ENCODE measurements at regions of chr2 and their contacts with region 1.

Region 1: DNA sequence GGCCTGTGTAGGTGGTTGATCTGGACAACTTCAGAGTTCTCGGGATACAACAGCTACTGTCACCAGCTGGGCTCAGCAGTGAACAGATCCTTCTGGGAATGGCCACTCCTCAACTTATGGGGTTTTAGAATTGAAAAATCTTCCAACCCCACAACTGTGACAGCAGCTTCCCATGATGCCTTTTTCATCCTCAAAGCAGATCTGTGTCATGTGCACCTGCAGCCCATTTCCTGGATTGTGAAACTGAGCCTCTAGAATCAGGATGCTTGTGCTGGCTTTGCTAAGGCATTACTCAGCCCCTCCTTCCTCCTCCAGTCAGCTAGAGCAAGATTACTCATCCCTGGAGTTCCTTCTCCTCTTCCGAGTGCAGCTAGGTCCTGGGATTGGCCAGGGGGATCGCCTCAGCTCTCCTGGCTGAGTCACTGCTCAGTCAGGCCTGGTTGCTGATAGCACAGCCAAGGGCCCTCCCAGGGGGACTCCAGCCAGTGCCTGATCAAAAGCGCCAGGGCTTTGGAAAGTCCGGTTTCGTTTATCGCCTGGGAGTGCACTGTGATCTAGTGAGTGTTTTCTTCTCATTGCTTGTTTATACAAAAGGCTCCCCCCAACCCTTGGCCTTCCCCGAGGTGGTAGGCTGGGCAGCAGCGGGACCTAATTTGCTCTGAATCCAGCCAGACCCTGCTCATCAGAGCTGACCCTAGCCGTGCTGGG is 2.4 kb upstream of the LPIN1 start:
- DNase-seq: peak; percentile 43 to 91 (median 62)
- ATAC-seq: peak; percentile 30
- H3K4me3 ChIP-seq: peak overlapping the region; percentile 34
- H3K4me3 Mint-ChIP-seq: peak overlapping the region; percentile 78
- H3K27ac ChIP-seq: peak overlapping the region in 1 of 2 donors; percentile 61
- H3K27ac Mint-ChIP-seq: peak overlapping the region; percentile 76
- H3K4me1 ChIP-seq: peaks cover 52% of the 10 kb centered on the region
- H3K4me1 Mint-ChIP-seq: peaks cover 54% of the 10 kb centered on the region
- H3K27me3 ChIP-seq: no peaks in the 10 kb centered on the region
- H3K27me3 Mint-ChIP-seq: no peaks in the 10 kb centered on the region
- CTCF ChIP-seq: no peak

Region 2: DNA sequence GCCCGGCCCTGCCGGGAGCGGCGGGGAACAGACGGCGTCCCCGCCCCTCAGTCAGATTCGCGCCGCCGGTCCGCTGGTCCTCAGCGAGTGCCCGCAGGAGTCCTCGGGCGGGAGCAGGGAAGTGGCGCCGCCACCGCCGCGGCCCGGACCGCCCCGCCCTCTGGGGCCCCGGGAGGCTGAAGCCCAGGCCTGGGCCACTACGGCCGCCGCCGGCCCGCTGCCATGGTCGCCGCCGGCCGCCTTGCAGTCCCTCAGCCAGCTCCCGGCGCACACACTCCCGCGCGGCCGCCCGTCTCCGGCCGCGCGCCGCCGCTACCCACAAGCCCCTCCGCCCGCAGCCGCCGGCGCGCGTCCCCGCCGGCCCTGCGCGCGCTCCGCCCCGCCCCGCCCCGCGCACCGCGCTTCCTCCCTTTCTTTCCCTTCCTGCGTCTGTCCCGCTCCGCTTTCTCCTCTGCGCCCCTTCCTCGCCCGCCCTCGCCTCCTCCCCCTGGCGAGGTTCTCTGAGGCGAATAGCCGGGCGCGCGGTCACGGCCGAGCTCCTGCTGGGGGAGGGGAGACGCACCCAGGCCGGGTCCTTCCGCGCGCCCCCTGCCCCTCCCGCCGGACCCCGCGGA is 399.6 kb before region 1 on chr2 and contains the start of gene ROCK2:
- CTCF ChIA-PET with region 1: no interaction called
- POLR2A ChIA-PET with region 1: no interaction called
- intact Hi-C with region 1: loop called in 1 of 2 experiments (anchors 10 kb)
- DNase-seq: peak; percentile 42 to 83 (median 59)
- ATAC-seq: peak; percentile 68
- H3K4me3 ChIP-seq: peak within 1 kb of the TSS; percentile 88
- H3K4me3 Mint-ChIP-seq: peak within 1 kb of the TSS; percentile 98
- H3K27ac ChIP-seq: peak within 1 kb of the TSS; percentile 7 to 42
- H3K27ac Mint-ChIP-seq: peak within 1 kb of the TSS; percentile 88
- H3K4me1 ChIP-seq: peaks cover 16% of the 10 kb centered on the region
- H3K4me1 Mint-ChIP-seq: peaks cover 44% of the 10 kb centered on the region
- H3K27me3 ChIP-seq: no peaks in the 10 kb centered on the region
- H3K27me3 Mint-ChIP-seq: no peaks in the 10 kb centered on the region
- CTCF ChIP-seq: no peak
- total RNA-seq, gene ROCK2: 6.9 to 9.4 TPM

Region 3: DNA sequence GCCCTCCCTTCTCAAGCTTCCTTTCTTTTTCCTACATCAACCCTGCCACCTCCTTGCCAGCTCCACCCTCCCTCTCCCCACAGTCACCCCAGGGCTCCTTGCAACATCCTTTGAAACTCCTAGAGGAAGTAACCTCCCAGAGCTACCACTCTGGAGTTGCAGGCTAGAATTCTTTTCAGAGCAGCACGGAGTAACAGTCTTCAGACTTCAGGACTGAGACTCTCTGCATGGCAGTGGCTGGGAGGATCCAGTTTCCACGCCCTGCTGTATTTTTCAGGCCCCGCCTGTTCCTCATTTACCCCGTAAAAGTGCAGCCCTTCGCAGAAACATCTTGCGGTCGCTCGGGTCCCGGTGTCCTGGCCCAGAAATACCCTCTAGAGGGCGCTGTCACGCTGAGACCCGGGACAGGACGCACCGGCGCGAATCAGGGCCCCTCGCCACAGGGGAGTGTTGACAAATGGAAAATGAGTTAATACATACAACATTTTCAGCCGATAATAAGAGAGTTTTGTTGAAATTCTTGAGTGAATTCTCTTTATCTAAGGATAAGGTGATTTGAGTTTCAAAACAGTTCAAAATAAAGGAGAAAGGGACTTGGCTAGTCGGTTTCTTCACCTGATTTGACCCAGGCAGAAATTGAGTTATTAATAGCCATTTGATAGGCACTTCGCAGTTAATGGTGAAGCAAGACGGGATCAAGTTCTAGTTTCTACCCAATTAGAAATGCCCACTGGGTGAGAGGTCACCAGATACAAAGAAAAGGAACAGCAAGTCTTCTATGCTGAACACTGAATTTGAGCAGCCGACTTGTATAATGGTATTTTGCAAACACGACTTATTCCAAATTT is 55.6 kb before region 1 on chr2:
- CTCF ChIA-PET with region 1: interaction called, 10 read pairs
- POLR2A ChIA-PET with region 1: interaction called, 7 read pairs
- intact Hi-C with region 1: loop called in 1 of 2 experiments (anchors 2 kb)
- DNase-seq: peak; percentile 68 to 89 (median 76)
- ATAC-seq: peak; percentile 91
- H3K4me3 ChIP-seq: peak overlapping the region; percentile 1
- H3K4me3 Mint-ChIP-seq: no peak overlapping the region
- H3K27ac ChIP-seq: no peak overlapping the region
- H3K27ac Mint-ChIP-seq: no peak overlapping the region
- H3K4me1 ChIP-seq: peaks cover 10% of the 10 kb centered on the region
- H3K4me1 Mint-ChIP-seq: peaks cover 8% of the 10 kb centered on the region
- H3K27me3 ChIP-seq: no peaks in the 10 kb centered on the region
- H3K27me3 Mint-ChIP-seq: peaks cover 18% of the 10 kb centered on the region
- CTCF ChIP-seq: peak; percentile 85

Region 4: DNA sequence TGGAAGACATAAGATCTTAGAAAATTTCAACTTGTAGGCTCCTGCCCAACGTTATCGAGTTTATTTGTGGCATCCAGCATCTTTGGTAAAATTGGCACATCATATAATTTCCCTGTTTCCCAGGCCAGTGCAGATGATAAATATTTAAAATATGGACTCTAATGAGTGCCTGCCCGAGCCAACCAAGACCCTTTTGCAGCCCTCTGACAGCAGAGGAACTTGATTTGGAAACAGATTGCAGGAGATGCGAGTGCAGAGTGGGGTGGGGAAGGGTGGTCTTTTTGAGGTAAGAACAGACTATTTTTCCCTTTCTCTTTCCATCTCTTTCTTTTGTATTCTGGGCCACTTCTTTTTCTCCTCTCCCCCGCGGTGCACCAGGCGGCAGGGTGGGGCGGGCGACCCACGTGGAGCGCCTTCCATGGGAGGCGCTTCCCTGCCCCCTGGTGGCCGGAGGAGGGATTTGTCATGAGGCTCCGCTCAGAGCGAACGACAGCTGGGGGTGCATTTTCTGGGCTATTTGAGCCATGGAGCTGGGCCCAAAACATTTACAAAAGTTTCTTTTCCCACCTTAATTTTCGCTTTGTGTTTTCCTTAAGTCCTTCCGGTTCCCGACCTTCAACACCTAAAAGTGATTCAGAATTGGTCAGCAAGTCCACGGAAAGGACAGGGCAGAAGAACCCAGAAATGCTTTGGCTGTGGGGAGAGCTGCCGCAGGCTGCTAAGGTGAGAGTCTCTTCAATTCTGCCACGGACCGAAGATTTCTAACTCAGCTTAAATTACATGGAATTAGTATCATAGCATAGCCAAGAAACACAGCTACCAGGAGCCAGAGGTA is 35.1 kb after region 1 on chr2:
- CTCF ChIA-PET with region 1: interaction called, 14 read pairs
- POLR2A ChIA-PET with region 1: interaction called, 11 read pairs
- intact Hi-C with region 1: loop called (anchors 2 kb)
- DNase-seq: peak; percentile 79 to 92 (median 86)
- ATAC-seq: peak; percentile 96
- H3K4me3 ChIP-seq: peak overlapping the region; percentile 38
- H3K4me3 Mint-ChIP-seq: peak overlapping the region; percentile 62
- H3K27ac ChIP-seq: peak overlapping the region in 1 of 2 donors; percentile 8
- H3K27ac Mint-ChIP-seq: peak overlapping the region; percentile 64
- H3K4me1 ChIP-seq: peaks cover 38% of the 10 kb centered on the region
- H3K4me1 Mint-ChIP-seq: peaks cover 42% of the 10 kb centered on the region
- H3K27me3 ChIP-seq: no peaks in the 10 kb centered on the region
- H3K27me3 Mint-ChIP-seq: no peaks in the 10 kb centered on the region
- CTCF ChIP-seq: peak; percentile 97

Measured in CD4-positive, alpha-beta T cell (primary cell).